ENCODE measurements at regions of chr16 and their contacts with region 1.

Region 1: GRCh38 chr16:89507834-89508590 is at the start of gene SPG7:
- DNase-seq: peak; percentile 89
- H3K4me3 ChIP-seq: peak within 1 kb of the TSS; percentile 79
- H3K27ac ChIP-seq: peak within 1 kb of the TSS; percentile 74
- H3K4me1 ChIP-seq: peaks cover 36% of the 10 kb centered on the region
- CTCF ChIP-seq: 0 out of 2 replicates have a peak, but pooled peaks have one; percentile 9
- total RNA-seq, gene SPG7: 77.6 and 92.7 TPM in 2 replicates

Region 2: DNA sequence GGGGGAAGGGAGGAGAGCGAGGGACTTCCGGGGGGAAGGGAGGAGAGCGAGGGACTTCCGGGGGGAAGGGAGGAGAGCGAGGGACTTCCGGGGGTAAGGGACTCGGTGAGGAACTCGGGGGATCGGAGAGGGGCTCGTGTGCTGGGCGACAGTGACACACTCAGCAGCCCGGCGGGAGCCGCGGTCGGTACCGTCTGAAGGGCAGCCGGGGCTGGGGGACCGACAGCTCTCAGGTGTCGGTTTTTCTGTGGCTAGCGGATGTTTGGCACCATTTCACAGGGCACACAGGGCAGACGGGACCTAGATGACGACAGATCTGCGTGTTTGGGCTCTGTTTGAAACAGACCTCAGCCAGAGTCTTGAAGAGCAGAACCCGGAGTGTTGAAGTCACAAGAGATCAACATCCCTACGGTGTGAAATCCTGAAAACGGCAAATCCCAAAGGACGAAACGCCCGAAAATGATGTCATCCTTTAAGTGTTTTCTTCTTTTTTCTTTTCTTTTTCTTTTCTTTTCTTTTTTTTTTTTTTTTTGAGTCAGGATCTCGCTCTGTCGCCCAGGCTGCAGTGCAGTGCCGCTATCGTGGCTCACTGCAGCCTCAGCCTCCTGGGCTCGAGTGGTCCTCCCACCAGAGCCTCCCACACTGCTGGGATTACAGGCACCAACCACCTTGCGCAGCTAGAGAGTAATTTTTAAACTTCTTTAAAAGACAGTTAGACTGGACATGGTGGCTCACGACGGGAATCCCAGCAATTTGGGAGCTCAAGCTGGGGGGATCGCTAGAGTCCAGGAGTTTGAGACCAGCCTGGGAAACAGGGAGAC is 266.6 kb before region 1 on chr16:
- CTCF ChIA-PET with region 1: no interaction called
- POLR2A ChIA-PET with region 1: no interaction called
- intact Hi-C with region 1: loop called (anchors 2 kb)
- DNase-seq: peak; percentile 85
- H3K4me3 ChIP-seq: peak overlapping the region; percentile 90
- H3K27ac ChIP-seq: peak overlapping the region; percentile 78
- H3K4me1 ChIP-seq: peaks cover 10% of the 10 kb centered on the region
- CTCF ChIP-seq: no peak

Region 3: DNA sequence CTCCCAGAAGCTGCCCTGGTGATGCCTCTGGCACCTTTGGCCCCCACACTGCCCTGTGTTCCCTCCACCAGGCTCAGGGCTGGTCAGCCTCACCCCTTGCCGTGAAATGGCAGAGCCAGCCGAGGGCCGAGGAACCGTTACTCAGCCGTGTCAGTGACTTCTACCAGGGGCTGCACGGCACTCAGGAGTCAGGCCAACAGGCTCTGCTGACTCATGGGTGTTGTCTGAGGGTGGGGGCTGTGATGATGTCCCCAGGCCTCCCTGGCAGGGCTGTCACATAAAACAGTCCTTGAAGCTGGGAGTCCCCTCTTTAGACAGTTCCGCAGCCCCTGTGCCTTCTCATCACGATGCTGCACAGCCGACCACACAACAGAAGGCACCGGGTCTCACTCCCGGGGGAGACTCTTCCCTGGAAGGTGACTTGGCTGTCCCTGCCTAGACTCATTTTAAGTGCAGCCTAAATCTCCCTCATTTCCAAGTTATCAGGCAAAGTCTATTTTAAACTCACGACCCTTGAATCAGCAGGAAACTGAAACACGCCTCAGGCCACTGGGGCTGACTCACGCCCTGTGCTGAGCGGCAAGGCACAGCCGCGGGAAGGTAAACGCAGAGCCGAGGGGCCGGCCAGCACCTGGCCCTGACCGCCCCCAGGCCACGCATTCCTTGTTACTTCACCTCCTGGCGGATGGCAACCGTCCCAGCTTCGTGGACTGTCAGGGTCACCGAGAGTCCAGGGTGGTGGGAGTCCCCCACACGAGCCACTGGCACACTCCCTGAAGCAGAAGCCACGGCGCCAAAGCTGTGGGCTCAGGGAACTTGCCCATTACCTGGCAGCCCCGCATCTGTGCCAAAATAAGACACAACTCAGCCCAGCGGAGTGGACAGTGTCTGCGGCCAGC is 187.9 kb before region 1 on chr16:
- CTCF ChIA-PET with region 1: no interaction called
- POLR2A ChIA-PET with region 1: no interaction called
- intact Hi-C with region 1: loop called (anchors 5 kb)
- DNase-seq: no peak
- H3K4me3 ChIP-seq: no peak overlapping the region
- H3K27ac ChIP-seq: no peak overlapping the region
- H3K4me1 ChIP-seq: peaks cover 37% of the 10 kb centered on the region
- CTCF ChIP-seq: no peak

Region 4: DNA sequence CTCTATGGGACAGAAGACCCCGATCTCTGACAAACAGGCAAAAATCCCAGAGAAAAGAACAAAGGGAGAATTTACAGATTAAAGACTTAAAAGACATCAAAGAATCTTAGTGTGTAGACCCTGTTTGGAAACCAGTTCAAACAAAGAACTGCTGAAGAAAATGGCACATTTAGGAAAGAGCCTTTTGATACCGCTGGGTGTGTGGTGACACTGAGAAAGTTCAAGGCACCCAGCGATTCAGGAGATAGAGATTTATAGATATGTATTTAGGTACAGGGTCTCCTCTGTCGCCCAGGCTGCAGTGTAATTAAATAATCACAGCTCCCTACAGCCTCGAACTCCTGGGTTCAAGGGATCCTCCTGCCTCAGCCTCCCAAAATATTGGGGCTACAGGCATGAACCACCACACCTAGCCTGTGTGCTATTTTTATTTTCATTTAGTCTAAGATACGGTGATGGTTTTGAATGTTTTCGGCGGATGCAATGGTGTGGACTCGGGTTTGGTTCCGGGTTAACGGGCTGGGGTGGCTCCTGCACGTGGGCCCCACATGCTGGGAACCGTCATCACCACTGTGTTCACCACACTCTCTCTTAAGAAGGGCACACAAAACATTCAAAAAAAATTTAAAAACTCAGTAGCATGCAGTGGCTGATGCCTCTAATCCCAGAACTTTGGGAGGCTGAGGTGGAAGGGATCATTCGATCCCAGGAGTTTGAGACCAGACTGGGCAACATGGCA is 176.5 kb before region 1 on chr16:
- CTCF ChIA-PET with region 1: no interaction called
- POLR2A ChIA-PET with region 1: no interaction called
- intact Hi-C with region 1: loop called (anchors 2 kb)
- DNase-seq: no peak
- H3K4me3 ChIP-seq: no peak overlapping the region
- H3K27ac ChIP-seq: peak overlapping the region; percentile 45
- H3K4me1 ChIP-seq: peaks cover 72% of the 10 kb centered on the region
- CTCF ChIP-seq: no peak

Region 5: GRCh38 chr16:89343501-89344457 is 164.2 kb before region 1 on chr16:
- CTCF ChIA-PET with region 1: no interaction called
- POLR2A ChIA-PET with region 1: interaction called, 10 read pairs
- intact Hi-C with region 1: no loop called
- DNase-seq: no peak
- H3K4me3 ChIP-seq: no peak overlapping the region
- H3K27ac ChIP-seq: no peak overlapping the region
- H3K4me1 ChIP-seq: peaks cover 25% of the 10 kb centered on the region
- CTCF ChIP-seq: no peak

Region 6: DNA sequence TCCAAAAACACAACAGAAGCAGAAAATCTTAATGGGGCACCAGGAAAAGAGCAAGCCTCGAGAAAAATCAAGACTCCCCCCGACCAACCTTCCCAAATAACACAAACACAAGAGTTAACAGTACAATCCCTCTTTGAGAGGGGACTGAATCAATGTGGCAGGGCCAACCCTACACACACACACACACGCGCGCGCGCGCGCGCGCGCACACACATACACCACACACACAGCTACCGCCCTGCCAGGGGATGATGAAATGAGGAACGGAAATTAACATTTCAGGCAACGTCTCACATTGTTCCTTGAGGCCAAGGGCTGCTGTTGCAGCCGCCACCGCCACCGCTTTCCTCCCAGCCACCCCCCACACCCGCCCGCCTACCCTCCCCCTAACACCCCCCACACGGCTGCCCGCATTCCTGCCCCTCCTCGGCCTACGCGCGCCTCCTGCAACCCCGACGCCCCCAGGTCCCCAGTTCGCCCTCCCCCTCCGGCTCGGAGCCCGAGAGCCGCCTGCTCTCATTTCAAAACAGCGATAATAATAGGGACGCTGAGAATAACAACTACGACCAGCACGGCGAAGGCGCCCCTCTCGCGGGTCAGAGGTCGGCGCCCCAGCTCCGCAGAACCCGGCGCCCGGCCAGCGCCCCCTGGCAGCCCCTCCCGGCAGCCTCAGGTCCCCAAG is 18.8 kb before region 1 on chr16:
- CTCF ChIA-PET with region 1: no interaction called
- POLR2A ChIA-PET with region 1: no interaction called
- intact Hi-C with region 1: loop called (anchors 1 kb)
- DNase-seq: peak; percentile 96
- H3K4me3 ChIP-seq: peak overlapping the region; percentile 83
- H3K27ac ChIP-seq: peak overlapping the region; percentile 92
- H3K4me1 ChIP-seq: peaks cover 56% of the 10 kb centered on the region
- CTCF ChIP-seq: peak; percentile 38; the same call in 1 of the 2 replicates

Region 7: DNA sequence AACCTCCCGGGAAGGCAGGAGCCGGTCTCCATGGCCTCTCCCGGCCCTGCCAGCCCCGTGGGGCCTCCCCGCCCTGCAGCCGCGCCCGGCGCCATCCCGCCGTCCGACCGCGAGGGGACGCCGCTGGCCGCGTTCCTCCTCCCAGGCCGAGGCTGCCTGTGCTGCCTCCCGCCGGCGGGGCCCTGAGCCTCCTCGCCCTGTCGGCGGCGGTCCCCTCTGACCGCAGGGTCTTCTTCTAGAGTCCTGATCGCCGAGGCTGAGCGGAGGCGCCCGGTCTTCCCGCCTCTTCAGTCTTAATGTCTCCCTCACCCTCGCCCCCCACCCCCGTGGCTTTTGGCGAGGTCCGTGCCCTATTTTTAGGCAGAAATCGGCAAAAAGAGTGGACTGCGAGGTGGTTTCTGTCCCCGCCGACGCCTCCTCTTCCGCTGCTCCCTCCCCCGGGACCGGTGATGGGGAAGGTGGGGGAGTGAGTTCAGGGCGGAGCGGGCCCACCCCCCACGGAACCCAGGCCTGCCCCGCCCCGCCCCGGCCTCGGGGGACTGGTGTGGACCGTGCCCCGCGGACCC is 66.8 kb after region 1 on chr16:
- CTCF ChIA-PET with region 1: no interaction called
- POLR2A ChIA-PET with region 1: no interaction called
- intact Hi-C with region 1: no loop called
- DNase-seq: peak; percentile 61
- H3K4me3 ChIP-seq: peak overlapping the region; percentile 42
- H3K27ac ChIP-seq: no peak overlapping the region
- H3K4me1 ChIP-seq: peaks cover 23% of the 10 kb centered on the region
- CTCF ChIP-seq: peak; percentile 73

Region 8: GRCh38 chr16:89623511-89624261 is 115.7 kb after region 1 on chr16:
- CTCF ChIA-PET with region 1: no interaction called
- POLR2A ChIA-PET with region 1: no interaction called
- intact Hi-C with region 1: no loop called
- DNase-seq: no peak
- H3K4me3 ChIP-seq: no peak overlapping the region
- H3K27ac ChIP-seq: no peak overlapping the region
- H3K4me1 ChIP-seq: no peaks in the 10 kb centered on the region
- CTCF ChIP-seq: no peak

Region 9: DNA sequence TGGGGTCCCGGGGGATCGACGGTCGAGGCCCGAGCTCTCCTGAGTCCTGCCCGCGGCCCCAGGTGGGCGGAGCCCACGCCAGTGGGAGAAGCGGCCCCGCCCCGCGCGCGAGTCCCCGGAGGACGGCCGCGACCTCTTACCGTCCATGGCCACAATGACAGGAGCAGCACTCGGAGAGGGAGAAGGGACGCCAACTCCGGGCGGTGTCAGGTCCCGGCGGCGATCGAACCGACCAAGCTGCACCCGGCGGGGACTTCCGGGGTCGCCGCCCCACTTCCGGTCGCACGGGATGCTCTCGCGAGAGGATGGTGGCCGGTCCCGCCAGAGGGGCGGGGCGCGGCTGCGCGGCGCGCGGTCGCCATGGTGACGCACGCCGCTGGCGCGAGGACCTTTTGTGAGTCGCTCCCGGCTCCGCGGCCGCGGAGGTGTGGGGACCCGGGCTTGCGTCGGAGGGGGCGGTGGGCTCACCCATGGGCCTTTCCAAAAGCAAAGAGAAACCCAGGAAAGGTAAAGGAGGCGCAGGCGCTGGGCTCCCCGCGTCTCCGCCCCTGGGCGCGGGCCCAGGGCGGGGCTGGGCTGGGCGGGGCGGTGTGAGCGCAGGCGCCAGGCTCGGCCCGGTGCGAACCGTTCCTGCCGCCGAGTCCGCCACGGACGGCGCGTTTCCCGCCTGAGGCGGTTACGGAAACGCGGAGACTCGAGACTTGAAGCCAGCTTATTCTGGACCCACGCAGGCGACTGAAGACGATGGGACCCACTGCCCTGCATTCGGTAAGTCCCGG is 149.6 kb after region 1 on chr16 and contains the starts of genes CHMP1A and SPATA33:
- CTCF ChIA-PET with region 1: no interaction called
- POLR2A ChIA-PET with region 1: no interaction called
- intact Hi-C with region 1: no loop called
- DNase-seq: peak; percentile 94
- H3K4me3 ChIP-seq: peak within 1 kb of the TSS; percentile 98
- H3K27ac ChIP-seq: peak within 1 kb of the TSS; percentile 53
- H3K4me1 ChIP-seq: peaks cover 13% of the 10 kb centered on the region
- CTCF ChIP-seq: no peak
- total RNA-seq, gene CHMP1A: 53.1 and 57.5 TPM in 2 replicates
- total RNA-seq, gene SPATA33: 8.6 and 9.4 TPM in 2 replicates